ENCODE measurements at regions of chr22 and their contacts with region 1.

Region 1: DNA sequence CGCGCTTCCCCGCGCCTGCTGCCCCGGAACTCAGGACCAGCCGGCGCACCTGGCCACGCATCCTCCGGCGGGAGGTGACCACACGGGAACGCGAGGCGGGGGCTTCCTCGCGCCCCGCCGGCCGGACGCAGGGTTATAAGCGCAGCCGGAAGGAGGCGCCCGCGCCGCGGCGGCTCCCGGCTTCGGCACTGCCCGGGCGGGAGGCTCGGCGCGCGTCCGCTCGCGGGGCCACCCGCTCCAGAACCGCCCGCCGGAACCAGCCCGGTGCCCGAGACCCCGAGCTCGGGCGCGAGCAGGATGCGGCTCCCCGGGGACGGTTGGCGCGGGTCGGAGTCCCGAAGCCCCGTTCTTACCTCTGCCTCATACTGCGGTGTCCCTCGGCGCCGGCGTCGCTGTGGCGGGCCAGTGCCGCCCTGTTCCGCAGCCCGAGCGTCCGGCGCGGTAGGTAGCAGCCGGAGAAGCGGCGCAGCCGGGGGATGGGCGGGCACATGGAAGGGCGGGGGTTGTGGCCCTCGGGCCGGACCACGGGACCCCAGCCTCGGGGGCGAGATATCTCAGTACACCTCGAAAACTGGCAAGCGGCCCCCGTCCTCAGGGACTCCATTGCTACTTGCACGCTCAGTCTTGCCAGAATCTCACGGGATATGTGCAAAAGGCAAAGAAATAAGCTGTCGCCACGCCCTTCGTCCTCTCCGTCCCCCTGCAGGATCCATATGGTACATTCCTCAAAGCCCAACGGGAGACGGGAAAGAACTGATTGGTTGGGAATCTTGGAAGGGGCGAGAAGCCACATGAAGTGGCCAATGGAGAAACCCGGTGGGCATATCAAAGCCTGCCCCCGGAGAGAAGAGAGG is 23.1 kb downstream of the MICAL3 start:
- DNase-seq: peak; percentile 88
- H3K4me3 ChIP-seq: peak overlapping the region; percentile 80
- CTCF ChIP-seq: peak; percentile 62

Region 2: GRCh38 chr22:17988800-17989513 is 12.3 kb before region 1 on chr22:
- CTCF ChIA-PET with region 1: interaction called, 11 read pairs
- POLR2A ChIA-PET with region 1: no interaction called
- DNase-seq: no peak
- H3K4me3 ChIP-seq: no peak overlapping the region
- CTCF ChIP-seq: no peak

Region 3: GRCh38 chr22:18012531-18012930 is 11.3 kb after region 1 on chr22:
- CTCF ChIA-PET with region 1: interaction called, 18 read pairs
- POLR2A ChIA-PET with region 1: no interaction called
- DNase-seq: no peak
- H3K4me3 ChIP-seq: no peak overlapping the region
- CTCF ChIP-seq: no peak

Region 4: DNA sequence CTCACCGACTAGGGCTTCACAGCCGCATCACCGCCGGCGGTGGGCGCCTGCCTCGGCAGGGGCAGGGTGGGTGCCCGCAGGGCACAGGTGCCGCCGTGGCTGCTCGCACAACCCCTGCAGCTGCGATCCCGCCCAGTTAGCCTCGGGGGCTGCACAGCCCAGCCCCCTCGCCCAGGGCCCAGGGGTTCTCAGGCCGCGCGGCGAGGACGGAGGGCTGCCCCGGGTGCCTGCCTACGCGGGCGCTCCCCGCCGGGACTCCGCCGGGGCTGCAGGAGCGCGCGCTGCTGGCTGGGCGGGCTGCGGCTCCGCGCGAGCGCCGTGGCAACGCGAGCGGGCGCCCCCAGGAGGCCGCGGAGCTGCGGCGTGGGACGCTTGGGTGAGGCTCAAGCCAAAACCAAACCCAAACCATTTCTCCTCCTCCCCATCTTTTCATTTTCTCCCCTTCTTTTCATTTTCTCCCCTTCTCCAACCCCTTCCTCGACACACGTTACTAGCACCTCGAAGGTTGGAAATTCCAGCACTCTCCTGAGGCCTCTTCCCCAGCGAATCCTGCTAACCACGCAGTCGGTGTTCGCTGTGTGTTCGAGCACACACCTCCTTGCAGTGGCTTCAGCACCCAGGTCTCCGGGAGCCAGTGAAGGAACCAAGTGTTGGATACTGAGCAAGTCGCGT is 23.1 kb after region 1 on chr22 and contains the start of gene MICAL3:
- CTCF ChIA-PET with region 1: interaction called, 10 read pairs
- POLR2A ChIA-PET with region 1: interaction called, 4 read pairs
- DNase-seq: no peak
- H3K4me3 ChIP-seq: peak within 1 kb of the TSS; percentile 68
- CTCF ChIP-seq: peak; percentile 74